HepG2 (cell line): ENCODE measurements at regions of chr21 and their contacts with region 1.

Region 1: GRCh38 chr21:25639551-25640201 is 618 bp downstream of the JAM2 start:
- DNase-seq: no peak
- ATAC-seq: peak; percentile 94
- H3K4me3 ChIP-seq: peak overlapping the region; percentile 50 to 71 (median 54); a peak in 5 of 6 replicates
- H3K27ac ChIP-seq: no peak overlapping the region
- H3K4me1 ChIP-seq: peaks cover 8% of the 10 kb centered on the region; the same call in 1 of the 2 replicates
- H3K27me3 ChIP-seq: peaks cover 0 to 33% of the 10 kb centered on the region in 2 experiments; a peak in 2 of 5 replicates
- CTCF ChIP-seq: peak; percentile 45
- EP300 ChIP-seq: no peak
- POLR2A ChIP-seq: no peak
- RAD21 ChIP-seq: no peak

Region 2: GRCh38 chr21:25273959-25274358 is 365.7 kb before region 1 on chr21:
- CTCF ChIA-PET with region 1: no interaction called
- POLR2A ChIA-PET with region 1: no interaction called
- in situ Hi-C with region 1: no loop called
- intact Hi-C with region 1: loop called (anchors 5 kb)
- DNase-seq: no peak
- ATAC-seq: no peak
- H3K4me3 ChIP-seq: no peak overlapping the region
- H3K27ac ChIP-seq: no peak overlapping the region
- H3K4me1 ChIP-seq: no peaks in the 10 kb centered on the region
- H3K27me3 ChIP-seq: no peaks in the 10 kb centered on the region
- CTCF ChIP-seq: no peak
- EP300 ChIP-seq: no peak
- POLR2A ChIP-seq: no peak
- RAD21 ChIP-seq: no peak